Activated CD4-positive, alpha-beta T cell treated with anti-CD3 and anti-CD28 coated beads for 36 hours (primary cell): ENCODE measurements at regions of chr1 and their contacts with region 1.

Region 1: DNA sequence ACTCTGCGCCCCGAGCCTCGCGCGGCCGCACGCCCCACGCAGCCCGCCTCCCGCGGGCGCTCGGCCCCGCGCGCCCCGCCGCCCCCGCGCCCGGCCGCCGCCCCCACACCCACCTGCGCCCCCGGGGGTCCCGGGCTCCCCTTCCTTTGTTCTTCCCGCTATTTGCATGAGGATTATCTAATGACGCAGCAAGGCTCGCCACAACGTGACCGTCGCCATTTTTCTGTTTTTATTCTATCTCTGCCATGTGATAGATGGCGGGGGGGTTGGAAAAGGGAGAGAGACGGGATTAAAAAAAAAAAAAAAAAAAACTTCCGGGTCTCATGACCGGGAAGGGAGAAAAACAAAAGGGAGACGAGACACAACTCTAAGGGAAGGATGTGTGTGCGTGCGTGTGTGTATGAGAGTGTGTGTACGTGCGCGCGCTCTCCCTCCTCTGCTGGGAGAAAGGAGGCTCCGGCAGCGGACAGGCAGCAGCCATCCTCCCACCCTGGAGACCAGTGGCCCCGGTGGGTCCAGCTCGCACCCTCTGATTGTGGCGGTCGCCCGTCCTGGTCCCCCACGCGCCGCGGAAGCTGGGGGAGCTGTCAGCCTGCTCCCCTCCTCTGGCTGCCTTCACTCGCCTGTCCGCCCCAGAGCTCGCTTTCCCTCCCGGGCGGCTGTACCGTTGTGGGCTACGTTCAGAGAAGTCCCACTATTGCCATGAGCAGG is 80.4 kb upstream of the AK4 start:
- DNase-seq: peak; percentile 70
- ATAC-seq: peak; percentile 27
- H3K4me3 Mint-ChIP-seq: peak overlapping the region; percentile 93
- H3K27ac Mint-ChIP-seq: peak overlapping the region; percentile 95
- H3K4me1 Mint-ChIP-seq: peaks cover 52% of the 10 kb centered on the region
- H3K27me3 Mint-ChIP-seq: no peaks in the 10 kb centered on the region

Region 2: GRCh38 chr1:64744492-64745180 is 323.0 kb before region 1 on chr1 and contains the start of gene RAVER2:
- CTCF ChIA-PET with region 1: no interaction called
- POLR2A ChIA-PET with region 1: no interaction called
- intact Hi-C with region 1: loop called in 1 of 2 experiments (anchors 10 kb)
- DNase-seq: peak; percentile 72
- ATAC-seq: peak; percentile 79
- H3K4me3 Mint-ChIP-seq: peak within 1 kb of the TSS; percentile 76
- H3K27ac Mint-ChIP-seq: peak within 1 kb of the TSS; percentile 70
- H3K4me1 Mint-ChIP-seq: peaks cover 17% of the 10 kb centered on the region
- H3K27me3 Mint-ChIP-seq: peaks cover 5% of the 10 kb centered on the region
- total RNA-seq, gene RAVER2: 3.2 to 3.6 TPM

Region 3: DNA sequence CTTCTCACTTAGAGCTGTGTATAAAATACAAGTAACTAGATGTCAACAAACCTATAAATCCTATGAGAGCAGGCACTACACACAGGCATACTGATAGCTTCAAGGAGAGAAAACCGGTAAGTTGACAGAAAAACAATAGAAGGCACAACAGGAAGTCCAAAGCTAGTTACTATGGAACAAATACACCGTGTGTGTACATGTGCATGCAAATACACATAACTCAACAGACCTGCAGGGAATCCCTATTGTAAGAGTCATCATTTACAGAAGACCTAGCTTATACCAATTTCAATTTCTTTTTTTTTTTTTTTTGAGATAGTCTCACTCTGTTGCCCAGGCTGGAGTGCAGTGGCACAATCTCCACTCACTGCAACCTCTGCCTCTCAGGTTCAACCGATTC is 127.6 kb before region 1 on chr1:
- CTCF ChIA-PET with region 1: no interaction called
- POLR2A ChIA-PET with region 1: no interaction called
- intact Hi-C with region 1: no loop called
- DNase-seq: no peak
- ATAC-seq: peak; percentile 81
- H3K4me3 Mint-ChIP-seq: no peak overlapping the region
- H3K27ac Mint-ChIP-seq: peak overlapping the region; percentile 5
- H3K4me1 Mint-ChIP-seq: peaks cover 73% of the 10 kb centered on the region
- H3K27me3 Mint-ChIP-seq: no peaks in the 10 kb centered on the region

Region 4: DNA sequence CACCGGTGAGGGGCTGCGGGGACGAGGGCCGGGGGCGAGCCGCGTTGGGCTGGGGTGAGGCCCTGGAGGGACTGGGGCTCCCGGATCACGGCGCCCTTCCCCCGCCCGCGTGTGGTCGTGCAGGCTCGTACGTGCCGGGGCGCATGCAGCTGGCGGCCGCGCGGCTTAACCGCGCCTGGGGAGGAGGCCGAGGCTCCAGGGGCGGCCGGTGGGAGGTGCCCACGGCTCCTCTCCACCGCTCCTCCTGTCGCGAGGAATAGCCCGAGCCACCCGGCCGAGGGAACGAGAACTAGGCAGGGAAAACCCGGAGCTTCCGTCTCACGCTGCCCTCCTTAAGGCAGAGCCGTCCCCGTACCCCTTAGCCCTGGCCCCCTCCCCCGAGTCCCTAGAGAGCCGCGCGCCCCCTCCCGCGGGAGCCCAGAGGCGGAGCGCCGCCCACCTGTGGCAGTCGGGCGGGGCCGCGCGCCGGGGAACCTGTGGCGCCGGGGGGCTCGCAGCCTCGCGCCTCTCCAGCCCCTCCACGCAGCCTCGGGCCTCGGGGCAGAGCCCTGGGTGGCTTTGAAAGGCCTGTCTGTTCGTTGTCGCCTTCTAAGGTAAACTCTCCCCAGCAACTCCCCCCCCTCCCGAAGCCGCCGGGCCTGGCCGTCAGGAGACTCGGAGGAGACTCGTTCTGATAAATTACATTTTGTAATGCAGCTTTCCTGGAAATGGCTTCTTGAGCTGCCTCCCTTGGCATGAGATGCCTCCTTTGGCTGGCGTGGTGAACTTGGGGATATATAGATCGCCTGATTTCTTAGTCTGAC is 81.1 kb after region 1 on chr1:
- CTCF ChIA-PET with region 1: interaction called, 6 read pairs
- POLR2A ChIA-PET with region 1: no interaction called
- intact Hi-C with region 1: loop called (anchors 1 to 2 kb)
- DNase-seq: peak; percentile 88
- ATAC-seq: peak; percentile 78
- H3K4me3 Mint-ChIP-seq: peak overlapping the region; percentile 85
- H3K27ac Mint-ChIP-seq: peak overlapping the region; percentile 82
- H3K4me1 Mint-ChIP-seq: peaks cover 15% of the 10 kb centered on the region
- H3K27me3 Mint-ChIP-seq: peaks cover 43% of the 10 kb centered on the region

Region 5: GRCh38 chr1:65243491-65243890 is 175.8 kb after region 1 on chr1:
- CTCF ChIA-PET with region 1: no interaction called
- POLR2A ChIA-PET with region 1: no interaction called
- intact Hi-C with region 1: no loop called
- DNase-seq: no peak
- ATAC-seq: peak; percentile 12
- H3K4me3 Mint-ChIP-seq: no peak overlapping the region
- H3K27ac Mint-ChIP-seq: no peak overlapping the region
- H3K4me1 Mint-ChIP-seq: no peaks in the 10 kb centered on the region
- H3K27me3 Mint-ChIP-seq: peaks cover 26% of the 10 kb centered on the region

Region 6: GRCh38 chr1:65254319-65255034 is 186.8 kb after region 1 on chr1:
- CTCF ChIA-PET with region 1: no interaction called
- POLR2A ChIA-PET with region 1: no interaction called
- intact Hi-C with region 1: loop called (anchors 1 to 10 kb)
- DNase-seq: peak; percentile 93
- ATAC-seq: peak; percentile 96
- H3K4me3 Mint-ChIP-seq: peak overlapping the region; percentile 71
- H3K27ac Mint-ChIP-seq: peak overlapping the region; percentile 39
- H3K4me1 Mint-ChIP-seq: peaks cover 16% of the 10 kb centered on the region
- H3K27me3 Mint-ChIP-seq: peaks cover 16% of the 10 kb centered on the region

Region 7: DNA sequence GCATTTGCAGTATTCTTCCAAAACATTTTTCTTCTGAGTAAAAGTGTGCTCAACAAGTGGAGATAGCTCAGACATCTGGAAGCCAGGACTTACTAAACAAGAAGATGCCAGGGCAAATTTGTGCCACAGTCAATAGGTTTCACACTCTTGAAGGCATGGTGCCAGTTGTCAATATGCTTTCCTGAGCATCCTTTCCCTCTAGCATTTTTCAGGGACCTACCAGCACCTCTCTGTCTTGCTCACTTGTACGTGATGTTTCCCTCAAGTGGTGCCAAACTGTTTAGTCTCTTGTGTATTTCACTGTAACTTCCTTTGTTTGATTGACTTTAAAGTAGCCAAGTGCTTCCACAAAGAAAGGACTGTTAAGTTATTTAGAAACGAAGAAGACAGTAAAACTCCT is 1272.3 kb after region 1 on chr1:
- CTCF ChIA-PET with region 1: no interaction called
- POLR2A ChIA-PET with region 1: no interaction called
- intact Hi-C with region 1: loop called in 1 of 2 experiments (anchors 10 kb)
- DNase-seq: no peak
- ATAC-seq: no peak
- H3K4me3 Mint-ChIP-seq: peak overlapping the region; percentile 69
- H3K27ac Mint-ChIP-seq: peak overlapping the region; percentile 85
- H3K4me1 Mint-ChIP-seq: peaks cover 68% of the 10 kb centered on the region
- H3K27me3 Mint-ChIP-seq: no peaks in the 10 kb centered on the region